BJ (cell line): ENCODE measurements at regions of chr20 and their contacts with region 1.

Region 1: DNA sequence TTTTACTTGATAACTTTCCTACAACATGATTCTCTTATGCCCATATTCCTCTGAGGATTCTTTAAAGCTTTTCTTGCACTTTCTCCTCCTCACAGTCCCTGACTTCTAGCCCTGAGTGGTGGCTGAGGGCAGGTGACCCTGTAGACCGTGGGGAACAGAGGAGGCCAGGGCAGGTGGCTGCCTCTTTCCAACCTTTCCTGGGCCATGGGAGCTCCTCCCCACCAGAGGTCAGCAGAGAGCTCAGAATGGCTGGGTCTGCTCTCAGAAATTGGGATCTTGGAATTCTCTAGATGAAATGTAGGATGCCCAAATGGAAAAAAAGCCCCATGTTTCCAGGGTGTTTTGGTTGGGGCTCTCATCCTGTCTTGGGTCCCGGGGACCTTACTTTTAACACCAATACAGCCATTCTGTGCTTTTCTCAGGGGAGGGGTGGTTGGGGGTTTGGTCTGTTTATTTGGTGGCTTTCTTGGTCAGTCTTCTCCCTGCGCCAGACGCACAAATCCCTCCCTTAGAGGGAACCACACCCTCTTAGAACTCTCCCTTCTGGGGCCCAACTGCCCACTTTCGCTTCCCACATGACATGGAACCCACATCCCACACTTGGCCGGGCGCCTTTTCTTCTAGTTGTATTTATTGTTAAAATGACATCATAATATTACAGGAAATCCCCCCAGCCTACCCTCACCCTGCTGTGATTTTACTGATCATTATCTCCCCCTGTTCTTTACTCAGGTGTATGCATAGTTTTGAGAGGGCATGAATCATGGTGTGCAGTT is 17.9 kb downstream of the GNAS start:
- DNase-seq: no peak
- H3K4me3 ChIP-seq: no peak overlapping the region
- H3K27me3 ChIP-seq: peaks cover 13% of the 10 kb centered on the region
- CTCF ChIP-seq: peak; percentile 95

Region 2: GRCh38 chr20:58880994-58881752 is 10.7 kb after region 1 on chr20:
- CTCF ChIA-PET with region 1: interaction called, 15 read pairs
- POLR2A ChIA-PET with region 1: no interaction called
- DNase-seq: no peak
- H3K4me3 ChIP-seq: no peak overlapping the region
- H3K27me3 ChIP-seq: peaks cover 2% of the 10 kb centered on the region
- CTCF ChIP-seq: no peak